ENCODE measurements at regions of chr5 and their contacts with region 1.

Region 1: DNA sequence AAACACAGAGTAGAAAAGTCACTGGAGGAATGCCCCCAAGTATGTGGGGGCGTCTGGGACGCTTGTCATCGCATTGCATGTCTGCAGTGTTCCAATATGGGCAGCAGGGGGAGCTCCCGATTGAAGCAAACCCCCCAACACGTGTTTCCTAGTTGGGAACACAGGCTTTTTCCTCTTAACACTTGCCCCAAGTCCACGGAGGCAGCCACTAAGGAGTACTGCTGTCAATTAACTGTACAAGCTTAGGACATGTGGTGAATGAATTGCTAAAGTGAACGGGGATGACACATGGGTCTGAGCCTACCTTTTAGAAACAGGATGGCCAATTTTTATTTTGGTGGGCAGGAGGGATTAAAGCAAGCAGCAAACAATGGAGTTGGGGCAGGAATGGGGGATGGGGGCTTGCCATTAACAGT is 2.2 kb downstream of the GABRB2 start:
- DNase-seq: peak in 1 of 2 donors; percentile 70
- H3K4me3 ChIP-seq: no peak overlapping the region
- H3K27ac ChIP-seq: no peak overlapping the region
- H3K4me1 ChIP-seq: peaks cover 6 to 37% (median 30%) of the 10 kb centered on the region in 4 donors
- H3K27me3 ChIP-seq: peaks cover 12 to 53% (median 35%) of the 10 kb centered on the region in 3 donors
- CTCF ChIP-seq: peak in 4 of 7 experiments; percentile 51 to 78 (median 62)
- EP300 ChIP-seq: no peak
- POLR2A ChIP-seq: no peak

Region 2: DNA sequence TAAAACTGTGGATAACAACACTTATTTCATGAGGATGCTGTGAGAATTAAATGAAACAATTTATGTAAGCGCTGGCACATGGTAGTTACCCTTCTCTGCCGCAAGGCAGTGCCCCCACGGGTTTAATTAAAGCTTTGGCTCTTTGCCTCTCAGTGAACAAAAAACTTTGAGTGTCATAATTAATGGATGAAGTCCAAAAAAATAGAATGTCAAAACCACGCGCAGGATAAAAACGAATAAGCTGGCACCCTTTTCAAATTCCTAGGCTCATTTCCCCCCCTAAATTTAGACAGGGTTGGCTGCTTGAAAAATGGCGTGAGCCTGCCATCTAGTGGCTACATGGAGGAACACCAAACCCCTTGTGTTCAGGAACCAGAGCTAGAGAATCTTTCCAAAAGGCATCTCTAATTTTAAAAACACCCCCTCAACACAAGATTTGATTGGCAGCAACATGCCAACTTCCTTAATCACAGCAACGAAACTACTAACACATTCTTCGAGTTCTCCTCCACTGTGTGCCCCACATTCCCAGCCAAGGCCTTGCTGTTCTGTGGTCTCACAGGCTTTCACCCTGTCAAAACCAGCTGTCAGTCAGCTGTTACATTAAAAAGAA is 1864.1 kb after region 1 on chr5:
- intact Hi-C with region 1: loop called (anchors 10 kb)
- DNase-seq: peak; percentile 52 to 85
- H3K4me3 ChIP-seq: peak overlapping the region in 1 of 4 donors; percentile 15
- H3K27ac ChIP-seq: no peak overlapping the region
- H3K4me1 ChIP-seq: peaks cover 0 to 18% (median 6%) of the 10 kb centered on the region in 4 donors
- H3K27me3 ChIP-seq: peaks cover 0 to 6% (median 0%) of the 10 kb centered on the region in 3 donors
- CTCF ChIP-seq: peak in 5 of 7 experiments; percentile 68 to 88 (median 81)
- EP300 ChIP-seq: no peak
- POLR2A ChIP-seq: no peak

Measured in stomach (tissue), 19 donors.